Endothelial cell of umbilical vein (primary cell): ENCODE measurements at regions of chr2 and their contacts with region 1.

Region 1: DNA sequence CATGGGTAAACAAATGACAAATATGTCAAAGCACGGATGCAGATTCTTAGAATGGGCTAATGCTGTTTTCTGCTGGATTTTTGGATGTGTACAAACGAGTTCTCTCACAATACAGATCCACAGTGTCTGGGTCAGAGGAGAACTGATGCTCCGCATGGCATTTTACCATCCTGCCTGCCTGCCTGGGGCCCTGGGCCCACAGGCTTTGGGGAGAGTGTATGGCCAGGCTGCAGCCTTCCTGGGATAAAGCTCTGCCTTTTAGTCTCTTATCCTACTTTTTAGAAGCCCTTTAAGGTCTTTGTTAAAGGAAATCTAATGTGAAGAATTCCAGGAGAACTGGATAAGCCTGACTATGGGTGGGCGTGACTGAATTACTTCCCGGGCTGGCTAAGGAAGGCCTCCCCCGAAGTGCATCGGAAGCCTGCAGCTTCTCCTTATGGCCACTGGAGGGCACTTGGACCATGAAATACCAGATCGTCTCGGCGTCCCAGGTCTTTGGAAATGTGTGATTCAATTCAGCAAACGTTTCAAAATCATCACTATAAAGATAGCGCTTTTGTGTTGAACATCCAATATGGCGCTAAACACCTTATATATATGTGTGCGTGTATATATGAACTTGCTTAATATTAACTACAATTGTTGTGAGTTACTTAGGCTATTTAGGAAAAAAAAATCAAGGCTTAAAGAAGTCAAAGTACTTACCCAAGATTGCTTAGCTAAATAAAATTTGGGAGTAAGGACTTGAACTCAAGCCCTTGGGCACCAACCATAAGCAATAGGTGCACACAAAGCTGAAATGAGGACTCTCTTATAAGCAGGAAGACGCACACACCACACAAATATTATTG is 15.2 kb upstream of the DNPEP start:
- DNase-seq: peak; percentile 64
- H3K4me3 ChIP-seq: no peak overlapping the region
- H3K27ac ChIP-seq: no peak overlapping the region
- H3K4me1 ChIP-seq: peaks cover 2% of the 10 kb centered on the region
- H3K27me3 ChIP-seq: peaks cover 0 to 1% of the 10 kb centered on the region in 2 experiments
- CTCF ChIP-seq: peak; percentile 90 to 91
- POLR2A ChIP-seq: no peak

Region 2: DNA sequence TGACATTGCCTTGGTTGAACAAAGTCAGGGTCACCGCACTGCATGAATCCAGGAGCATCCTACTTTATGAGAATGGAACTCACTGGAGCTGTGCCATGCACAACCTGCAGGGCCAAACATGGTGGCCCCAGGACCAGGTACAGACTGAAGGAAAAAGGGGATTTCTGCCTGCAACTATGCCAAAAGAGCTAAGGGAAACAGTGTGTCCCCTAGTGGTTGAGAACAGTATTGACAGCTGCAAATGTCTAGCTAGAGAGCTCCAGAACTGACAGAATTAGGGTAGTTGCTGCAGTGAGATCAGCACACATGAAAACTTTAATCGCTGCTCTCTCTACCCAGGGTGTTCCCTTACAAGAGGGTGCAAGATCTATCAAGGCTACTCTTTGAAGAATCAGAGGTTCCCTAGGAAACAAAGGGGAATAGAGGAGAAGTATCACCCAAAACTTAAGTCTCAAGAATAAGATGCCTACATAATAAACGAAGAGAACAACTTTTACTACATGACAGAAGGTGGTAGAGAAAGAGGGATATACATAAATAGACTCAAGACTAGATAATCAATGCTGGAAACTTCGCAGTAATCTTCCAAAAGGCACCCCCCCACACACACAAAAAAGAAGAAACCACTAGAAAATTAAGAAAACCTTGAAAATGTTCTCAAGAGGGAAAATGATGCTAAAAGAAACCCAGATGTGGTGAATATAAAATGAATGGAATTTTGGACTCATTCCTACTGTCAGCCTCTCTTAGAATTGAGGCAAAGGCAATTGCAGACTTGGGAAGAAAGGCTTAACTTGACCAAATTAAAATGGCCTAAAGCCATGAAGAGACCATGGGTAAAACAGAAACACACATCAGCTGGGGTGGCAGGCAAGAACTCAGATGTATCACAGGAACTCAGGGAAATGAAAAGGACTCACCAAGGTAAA is 298.5 kb before region 1 on chr2:
- CTCF ChIA-PET with region 1: no interaction called
- POLR2A ChIA-PET with region 1: no interaction called
- dilution Hi-C with region 1: no loop called
- intact Hi-C with region 1: no loop called
- DNase-seq: peak; percentile 35
- H3K4me3 ChIP-seq: no peak overlapping the region
- H3K27ac ChIP-seq: no peak overlapping the region
- H3K4me1 ChIP-seq: no peaks in the 10 kb centered on the region
- H3K27me3 ChIP-seq: no peaks in the 10 kb centered on the region
- CTCF ChIP-seq: peak; percentile 84 to 86
- POLR2A ChIP-seq: no peak

Region 3: DNA sequence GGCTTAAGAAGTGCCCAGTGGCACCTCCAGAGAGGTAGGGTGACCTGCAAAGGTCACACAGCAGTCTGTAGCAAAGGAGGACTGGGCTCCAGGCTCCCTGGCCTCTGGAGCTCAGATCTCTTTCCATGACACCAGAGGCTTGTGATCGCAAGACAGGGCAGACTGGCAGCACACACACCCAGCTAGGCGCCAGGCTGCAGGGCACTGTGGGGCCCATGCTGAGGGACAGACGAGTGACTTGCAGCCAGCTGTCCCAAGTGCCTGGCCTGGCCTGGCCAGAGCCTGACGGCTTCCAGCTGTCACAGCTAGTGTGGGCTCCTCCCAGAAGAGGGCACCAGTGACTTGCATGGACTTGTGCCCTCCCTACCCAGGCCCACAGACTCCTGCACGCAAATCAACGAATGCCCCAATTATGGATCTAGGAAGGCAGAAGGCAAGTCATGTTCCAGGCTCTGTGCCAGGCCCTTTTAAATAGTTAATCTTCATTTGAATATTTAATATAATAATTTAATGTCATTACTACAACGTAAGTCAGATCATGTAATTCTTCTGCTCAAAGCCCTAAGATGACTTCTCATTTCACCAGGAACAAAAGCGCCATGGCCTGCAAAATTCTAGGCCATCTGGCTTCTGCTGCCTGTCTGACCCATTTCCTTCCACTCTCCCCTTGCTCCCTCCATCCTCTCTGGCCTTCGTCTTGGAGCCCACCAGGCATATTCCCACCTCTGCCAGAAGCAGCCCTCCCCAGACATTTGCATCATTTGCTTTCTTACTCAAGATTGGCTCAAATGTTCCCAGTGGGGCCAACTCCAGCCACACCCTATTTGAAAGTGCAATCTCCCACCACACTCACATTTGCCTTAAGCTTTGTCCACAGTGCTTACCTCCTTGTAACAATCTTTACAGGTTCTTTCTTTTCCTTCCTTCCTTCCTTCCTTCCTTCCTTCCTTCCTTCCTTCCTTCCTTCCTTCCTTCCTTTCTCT is 28.0 kb after region 1 on chr2:
- CTCF ChIA-PET with region 1: interaction called, 5 read pairs
- POLR2A ChIA-PET with region 1: no interaction called
- dilution Hi-C with region 1: no loop called
- intact Hi-C with region 1: loop called (anchors 2 kb)
- DNase-seq: peak; percentile 27
- H3K4me3 ChIP-seq: no peak overlapping the region
- H3K27ac ChIP-seq: no peak overlapping the region
- H3K4me1 ChIP-seq: no peaks in the 10 kb centered on the region
- H3K27me3 ChIP-seq: peaks cover 16 to 20% of the 10 kb centered on the region in 2 experiments
- CTCF ChIP-seq: peak in 1 of 2 donors; percentile 40
- POLR2A ChIP-seq: no peak

Region 4: GRCh38 chr2:219459460-219460311 is 56.8 kb after region 1 on chr2:
- CTCF ChIA-PET with region 1: interaction called, 11 read pairs
- POLR2A ChIA-PET with region 1: no interaction called
- dilution Hi-C with region 1: no loop called
- intact Hi-C with region 1: loop called (anchors 2 kb)
- DNase-seq: peak; percentile 38
- H3K4me3 ChIP-seq: no peak overlapping the region
- H3K27ac ChIP-seq: no peak overlapping the region
- H3K4me1 ChIP-seq: no peaks in the 10 kb centered on the region
- H3K27me3 ChIP-seq: no peaks in the 10 kb centered on the region
- CTCF ChIP-seq: peak; percentile 79 to 95
- POLR2A ChIP-seq: no peak

Region 5: DNA sequence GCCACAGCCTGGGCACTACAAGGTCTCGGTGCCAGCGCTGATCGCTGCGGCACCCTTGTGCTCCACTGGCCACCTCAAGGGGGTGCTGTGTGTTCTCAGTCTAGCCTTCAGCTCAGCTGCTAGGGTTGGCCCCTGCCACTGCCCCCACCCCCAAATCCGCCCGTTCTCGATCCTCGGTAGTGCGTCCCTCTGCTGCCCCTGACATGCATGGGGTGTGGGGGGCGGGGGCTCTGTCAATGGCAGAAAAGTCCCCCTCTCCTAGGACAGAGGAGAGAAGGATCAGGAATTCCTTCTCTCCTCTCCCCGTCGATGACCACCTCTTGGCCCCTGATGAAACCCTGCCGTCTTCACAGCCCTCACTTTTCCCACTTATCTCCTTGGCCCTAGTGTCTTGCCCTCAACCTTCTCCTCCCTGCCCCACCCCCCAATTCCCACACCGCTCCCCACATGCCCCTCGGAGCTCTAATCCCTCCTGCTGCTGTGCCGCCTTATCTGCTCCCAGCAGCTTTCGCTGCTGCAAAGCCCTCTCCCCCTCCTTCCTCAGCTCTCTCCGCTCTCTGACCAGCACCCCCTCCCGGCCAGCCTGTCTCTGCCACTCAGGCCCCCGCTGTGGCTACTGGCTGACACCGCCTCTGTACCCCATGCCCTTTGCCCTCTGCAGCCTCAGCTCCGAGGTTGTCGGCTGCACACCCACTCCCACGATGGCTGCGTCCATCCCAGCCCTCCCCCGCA is 107.1 kb after region 1 on chr2:
- CTCF ChIA-PET with region 1: interaction called, 19 read pairs
- POLR2A ChIA-PET with region 1: no interaction called
- dilution Hi-C with region 1: no loop called
- intact Hi-C with region 1: no loop called
- DNase-seq: peak; percentile 60
- H3K4me3 ChIP-seq: peak overlapping the region in 1 of 3 experiments; percentile 1
- H3K27ac ChIP-seq: no peak overlapping the region
- H3K4me1 ChIP-seq: no peaks in the 10 kb centered on the region
- H3K27me3 ChIP-seq: peaks cover 42 to 43% of the 10 kb centered on the region in 2 experiments
- CTCF ChIP-seq: peak; percentile 68 to 84
- POLR2A ChIP-seq: no peak

Region 6: DNA sequence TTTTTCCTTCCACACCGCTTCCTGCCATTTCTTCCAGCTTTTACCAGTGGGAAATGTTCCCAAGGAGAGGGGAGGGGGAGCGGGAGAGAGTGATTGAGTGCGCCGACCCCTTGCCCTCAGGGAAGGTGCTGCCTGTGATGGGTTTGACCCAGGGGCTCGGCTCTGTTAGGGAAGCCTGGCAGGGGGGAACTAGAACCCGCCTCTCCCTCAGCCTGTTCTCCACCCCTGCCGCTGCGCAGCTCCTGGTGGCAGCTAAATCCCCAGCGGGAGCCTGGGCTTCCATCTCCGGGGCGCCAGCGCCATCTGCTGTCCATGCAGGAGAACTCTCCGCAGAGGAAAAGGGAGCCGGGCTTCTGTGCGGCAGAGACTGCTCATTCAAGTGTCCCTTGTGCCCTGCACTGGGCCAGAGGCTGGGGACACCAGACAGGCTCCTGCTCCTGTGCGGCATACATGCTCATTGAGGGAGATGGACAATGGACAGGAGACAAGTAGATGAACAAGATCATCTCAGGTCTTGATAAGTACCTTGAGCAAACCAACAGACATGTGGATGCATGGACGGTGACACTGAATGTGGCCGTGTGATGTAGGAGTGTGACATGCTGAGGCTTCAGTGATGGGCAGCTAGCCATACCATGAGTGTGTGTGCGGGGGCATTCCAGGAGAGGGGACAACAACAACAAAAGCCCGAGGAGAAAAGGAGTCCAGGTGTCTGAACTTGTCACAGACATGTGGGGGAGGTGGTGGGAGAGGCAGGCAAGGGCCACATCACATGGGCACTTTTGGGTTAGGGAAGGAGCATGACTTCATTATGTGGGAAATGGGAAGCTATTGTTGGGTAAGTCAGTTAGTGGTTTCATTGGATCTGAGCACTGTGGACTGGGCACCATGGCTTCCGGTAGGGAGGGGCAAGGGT is 127.4 kb after region 1 on chr2:
- CTCF ChIA-PET with region 1: interaction called, 329 read pairs
- POLR2A ChIA-PET with region 1: interaction called, 4 read pairs
- dilution Hi-C with region 1: no loop called
- intact Hi-C with region 1: loop called (anchors 1 kb)
- DNase-seq: peak; percentile 79
- H3K4me3 ChIP-seq: no peak overlapping the region
- H3K27ac ChIP-seq: no peak overlapping the region
- H3K4me1 ChIP-seq: no peaks in the 10 kb centered on the region
- H3K27me3 ChIP-seq: peaks cover 30 to 38% of the 10 kb centered on the region in 2 experiments
- CTCF ChIP-seq: peak; percentile 90 to 94
- POLR2A ChIP-seq: no peak

Region 7: GRCh38 chr2:219612577-219613286 is 209.8 kb after region 1 on chr2:
- CTCF ChIA-PET with region 1: no interaction called
- POLR2A ChIA-PET with region 1: no interaction called
- dilution Hi-C with region 1: no loop called
- intact Hi-C with region 1: no loop called
- DNase-seq: no peak
- H3K4me3 ChIP-seq: no peak overlapping the region
- H3K27ac ChIP-seq: no peak overlapping the region
- H3K4me1 ChIP-seq: no peaks in the 10 kb centered on the region
- H3K27me3 ChIP-seq: no peaks in the 10 kb centered on the region
- CTCF ChIP-seq: no peak
- POLR2A ChIP-seq: no peak

Region 8: GRCh38 chr2:219642465-219643080 is 239.7 kb after region 1 on chr2:
- CTCF ChIA-PET with region 1: no interaction called
- POLR2A ChIA-PET with region 1: no interaction called
- dilution Hi-C with region 1: no loop called
- intact Hi-C with region 1: loop called (anchors 1 kb)
- DNase-seq: peak; percentile 92
- H3K4me3 ChIP-seq: no peak overlapping the region
- H3K27ac ChIP-seq: no peak overlapping the region
- H3K4me1 ChIP-seq: no peaks in the 10 kb centered on the region
- H3K27me3 ChIP-seq: peaks cover 0 to 3% of the 10 kb centered on the region in 2 experiments
- CTCF ChIP-seq: peak; percentile 99 to 100
- POLR2A ChIP-seq: no peak